Mammary epithelial cell (primary cell): ENCODE measurements at regions of chr2 and their contacts with region 1.

Region 1: DNA sequence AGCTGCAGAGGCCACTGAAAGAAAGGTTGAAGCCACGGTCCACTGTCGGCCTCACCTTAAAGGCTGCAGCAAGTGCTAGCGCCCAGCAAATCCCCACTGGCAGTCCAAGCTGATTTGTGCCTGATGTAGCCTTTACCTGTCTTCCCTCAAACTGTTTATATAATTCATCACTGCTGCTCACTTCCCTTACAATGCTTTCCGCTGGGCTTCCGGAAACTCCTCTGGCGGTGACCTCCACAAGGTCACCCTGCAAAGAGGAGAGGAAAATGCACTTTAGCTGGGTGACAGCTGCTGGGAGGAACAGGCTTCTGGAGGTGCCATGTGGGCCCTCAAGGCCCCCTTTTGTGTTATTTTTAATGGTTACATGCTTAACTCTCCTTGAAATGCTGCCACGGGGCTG is 126.2 kb downstream of the CMPK2 start:
- DNase-seq: no peak
- H3K4me3 ChIP-seq: no peak overlapping the region
- H3K27ac ChIP-seq: no peak overlapping the region
- H3K4me1 ChIP-seq: no peaks in the 10 kb centered on the region
- H3K27me3 ChIP-seq: no peaks in the 10 kb centered on the region
- CTCF ChIP-seq: no peak

Region 2: DNA sequence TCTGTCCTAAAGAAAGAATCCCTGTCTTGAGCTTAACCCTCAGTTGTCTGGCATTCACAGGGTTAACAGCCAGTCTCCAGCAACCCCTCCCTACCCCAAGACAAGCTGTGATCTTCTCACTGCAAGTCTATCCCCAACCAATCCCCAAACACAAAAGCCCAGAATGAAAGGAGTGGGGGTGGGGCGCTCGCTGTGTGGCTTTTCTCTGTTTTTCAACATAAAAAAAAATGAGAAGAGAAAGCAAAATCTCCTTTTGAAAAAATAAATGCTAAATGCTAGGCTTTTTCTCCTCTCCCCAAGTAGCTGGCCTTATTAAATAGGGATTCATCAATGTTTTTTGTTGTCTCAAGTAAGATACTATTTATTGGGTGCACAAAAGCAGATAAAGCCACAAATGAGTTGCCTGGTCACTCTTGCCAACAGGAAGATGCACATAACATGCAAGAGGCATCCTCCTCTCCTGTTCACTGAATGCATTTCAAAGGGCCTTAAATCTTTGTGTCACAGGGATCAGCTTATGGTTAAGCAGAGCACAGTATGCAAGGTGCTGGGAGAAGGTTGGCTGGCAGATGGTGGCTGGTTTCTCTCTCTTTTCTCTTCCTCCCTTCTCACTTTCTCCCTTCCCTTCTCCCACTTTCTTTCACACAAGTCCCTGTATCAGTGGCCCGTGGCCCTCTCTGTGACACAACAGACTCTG is 99.5 kb before region 1 on chr2:
- CTCF ChIA-PET with region 1: no interaction called
- dilution Hi-C with region 1: loop called (anchors 5 kb)
- in situ Hi-C with region 1: no loop called
- intact Hi-C with region 1: no loop called
- DNase-seq: no peak
- H3K4me3 ChIP-seq: no peak overlapping the region
- H3K27ac ChIP-seq: no peak overlapping the region
- H3K4me1 ChIP-seq: no peaks in the 10 kb centered on the region
- H3K27me3 ChIP-seq: no peaks in the 10 kb centered on the region
- CTCF ChIP-seq: no peak